MCF 10A (cell line): ENCODE measurements at regions of chr9 and their contacts with region 1.

Region 1: DNA sequence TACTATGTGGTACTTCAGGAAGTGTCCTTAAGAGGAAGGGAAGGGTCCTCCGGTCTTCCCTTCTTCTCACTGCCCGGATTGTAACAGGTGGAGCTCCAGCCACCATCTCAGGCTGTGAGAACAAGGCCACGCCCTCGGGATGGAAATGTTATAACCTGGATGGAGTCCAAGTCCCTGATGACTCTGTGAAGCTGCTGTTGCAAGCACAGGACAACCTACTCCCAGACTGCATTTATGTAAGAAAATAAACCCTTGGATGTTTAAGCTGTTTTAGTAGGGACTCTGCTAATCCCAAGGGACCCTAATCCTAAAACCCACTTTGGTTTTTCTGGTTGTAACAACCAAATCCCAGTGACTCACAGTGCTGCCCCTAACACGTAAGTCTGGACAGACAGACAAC is 221.6 kb downstream of the ACTL7B start:
- DNase-seq: peak; percentile 89
- H3K4me3 Mint-ChIP-seq: peak overlapping the region; percentile 59
- H3K27ac Mint-ChIP-seq: peak overlapping the region; percentile 98
- H3K4me1 Mint-ChIP-seq: peaks cover 20% of the 10 kb centered on the region
- H3K27me3 Mint-ChIP-seq: no peaks in the 10 kb centered on the region
- CTCF ChIP-seq: no peak

Region 2: GRCh38 chr9:108478431-108478837 is 155.8 kb before region 1 on chr9:
- CTCF ChIA-PET with region 1: interaction called, 3 read pairs
- POLR2A ChIA-PET with region 1: interaction called, 3 read pairs
- intact Hi-C with region 1: loop called (anchors 5 kb)
- DNase-seq: peak; percentile 97
- H3K4me3 Mint-ChIP-seq: peak overlapping the region; percentile 37
- H3K27ac Mint-ChIP-seq: peak overlapping the region; percentile 89
- H3K4me1 Mint-ChIP-seq: peaks cover 47% of the 10 kb centered on the region
- H3K27me3 Mint-ChIP-seq: no peaks in the 10 kb centered on the region
- CTCF ChIP-seq: no peak

Region 3: GRCh38 chr9:108579757-108580439 is 54.3 kb before region 1 on chr9:
- CTCF ChIA-PET with region 1: no interaction called
- POLR2A ChIA-PET with region 1: interaction called, 7 read pairs
- intact Hi-C with region 1: loop called (anchors 2 kb)
- DNase-seq: peak; percentile 96
- H3K4me3 Mint-ChIP-seq: no peak overlapping the region
- H3K27ac Mint-ChIP-seq: no peak overlapping the region
- H3K4me1 Mint-ChIP-seq: peaks cover 30% of the 10 kb centered on the region
- H3K27me3 Mint-ChIP-seq: peaks cover 52% of the 10 kb centered on the region
- CTCF ChIP-seq: no peak

Region 4: GRCh38 chr9:108603141-108603540 is 31.1 kb before region 1 on chr9:
- CTCF ChIA-PET with region 1: no interaction called
- POLR2A ChIA-PET with region 1: interaction called, 11 read pairs
- intact Hi-C with region 1: no loop called
- DNase-seq: peak; percentile 34
- H3K4me3 Mint-ChIP-seq: no peak overlapping the region
- H3K27ac Mint-ChIP-seq: peak overlapping the region; percentile 17
- H3K4me1 Mint-ChIP-seq: peaks cover 10% of the 10 kb centered on the region
- H3K27me3 Mint-ChIP-seq: no peaks in the 10 kb centered on the region
- CTCF ChIP-seq: no peak

Region 5: DNA sequence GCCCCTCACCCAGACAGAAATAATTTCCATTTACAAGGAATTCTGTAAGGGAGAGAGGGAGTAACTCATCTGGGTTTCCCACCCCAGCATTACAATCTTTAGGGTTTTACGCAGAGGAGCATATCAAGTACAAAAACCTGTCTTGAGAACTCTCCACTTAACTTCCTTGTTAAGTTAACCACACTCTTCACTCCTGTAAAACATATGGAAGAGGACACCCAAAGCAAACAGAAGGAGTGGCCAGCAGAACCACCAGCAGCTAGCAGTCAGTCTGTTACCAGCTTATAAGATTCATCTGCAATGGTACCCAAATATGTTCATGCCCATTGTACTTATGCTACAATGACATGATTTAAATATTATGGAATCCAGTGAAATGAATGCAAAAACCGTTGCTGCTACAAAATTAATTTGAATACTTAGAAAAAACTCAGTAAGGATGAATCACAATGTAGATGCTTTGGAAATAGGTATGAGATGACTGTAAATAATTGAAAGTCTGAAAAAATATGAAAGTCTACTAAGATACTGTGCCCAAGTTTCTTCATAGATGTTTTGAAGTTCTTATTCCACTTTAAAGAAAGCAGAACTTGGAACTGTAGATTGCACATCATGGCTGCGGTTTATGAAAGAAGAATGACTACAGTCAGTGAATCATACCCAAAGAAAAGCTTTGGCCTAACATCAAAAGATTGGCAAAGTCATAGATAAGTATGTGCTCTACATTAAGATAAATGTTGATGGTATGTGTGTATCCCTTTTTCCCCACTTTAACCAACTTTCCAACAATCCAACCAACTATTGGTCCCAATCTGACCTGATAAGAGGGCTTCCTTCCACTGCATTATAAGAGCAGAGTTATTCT is 12.0 kb before region 1 on chr9:
- CTCF ChIA-PET with region 1: interaction called, 7 read pairs
- POLR2A ChIA-PET with region 1: interaction called, 17 read pairs
- intact Hi-C with region 1: no loop called
- DNase-seq: peak; percentile 59
- H3K4me3 Mint-ChIP-seq: no peak overlapping the region
- H3K27ac Mint-ChIP-seq: no peak overlapping the region
- H3K4me1 Mint-ChIP-seq: peaks cover 9% of the 10 kb centered on the region
- H3K27me3 Mint-ChIP-seq: no peaks in the 10 kb centered on the region
- CTCF ChIP-seq: no peak

Region 6: DNA sequence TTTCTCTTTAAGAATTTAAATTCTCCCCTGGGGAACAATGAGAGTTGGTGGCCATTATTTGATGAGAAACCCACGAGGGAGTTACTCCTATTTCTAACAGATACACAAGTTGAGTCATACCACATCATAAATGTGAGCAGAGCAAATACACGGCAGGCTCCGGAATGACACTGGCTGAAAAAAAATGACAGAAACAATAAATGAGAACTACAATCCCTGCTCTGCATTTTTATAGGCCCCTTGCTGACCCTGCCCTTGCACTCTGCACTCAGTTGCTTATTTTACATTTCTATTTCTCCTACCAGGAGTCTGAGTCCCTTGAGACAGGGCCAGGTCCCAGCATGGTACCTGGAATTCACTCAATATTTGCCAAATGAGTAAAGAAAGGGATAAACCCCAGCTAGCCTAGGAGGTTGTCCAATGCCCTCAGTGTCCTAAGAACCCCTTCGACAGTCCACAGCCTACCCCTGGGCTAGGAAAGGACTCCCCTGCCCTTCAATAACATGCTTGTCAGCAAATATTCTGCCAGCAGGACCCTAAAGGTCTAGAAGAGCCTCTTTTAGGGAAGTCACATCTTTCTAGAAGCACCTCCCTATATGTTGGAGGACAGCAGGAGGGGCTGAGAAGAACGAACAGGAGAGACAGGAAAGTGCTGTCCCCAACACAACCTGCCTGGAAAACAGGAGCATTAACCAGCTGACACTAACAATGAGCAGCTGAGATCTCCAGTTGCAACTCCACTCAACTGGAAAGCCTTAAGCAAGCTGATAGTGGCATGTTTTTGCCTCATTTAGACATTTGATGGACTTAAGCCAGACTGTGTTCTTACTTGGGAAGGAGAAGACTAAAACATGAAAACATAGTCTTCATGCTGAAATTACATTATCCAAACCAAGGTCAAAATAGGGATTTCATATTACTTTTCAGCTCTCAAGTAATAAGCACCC is 30.4 kb after region 1 on chr9:
- CTCF ChIA-PET with region 1: interaction called, 3 read pairs
- POLR2A ChIA-PET with region 1: interaction called, 20 read pairs
- intact Hi-C with region 1: no loop called
- DNase-seq: peak; percentile 34
- H3K4me3 Mint-ChIP-seq: no peak overlapping the region
- H3K27ac Mint-ChIP-seq: peak overlapping the region; percentile 38
- H3K4me1 Mint-ChIP-seq: peaks cover 46% of the 10 kb centered on the region
- H3K27me3 Mint-ChIP-seq: no peaks in the 10 kb centered on the region
- CTCF ChIP-seq: no peak

Region 7: GRCh38 chr9:108704156-108704852 is 70.1 kb after region 1 on chr9:
- CTCF ChIA-PET with region 1: no interaction called
- POLR2A ChIA-PET with region 1: no interaction called
- intact Hi-C with region 1: no loop called
- DNase-seq: peak; percentile 20
- H3K4me3 Mint-ChIP-seq: no peak overlapping the region
- H3K27ac Mint-ChIP-seq: no peak overlapping the region
- H3K4me1 Mint-ChIP-seq: peaks cover 6% of the 10 kb centered on the region
- H3K27me3 Mint-ChIP-seq: no peaks in the 10 kb centered on the region
- CTCF ChIP-seq: no peak